ENCODE measurements at regions of chr10 and their contacts with region 1.

Region 1: GRCh38 chr10:104291439-104291951 is 22.5 kb downstream of the GSTO2 start:
- DNase-seq: peak; percentile 95
- ATAC-seq: peak; percentile 97

Region 2: DNA sequence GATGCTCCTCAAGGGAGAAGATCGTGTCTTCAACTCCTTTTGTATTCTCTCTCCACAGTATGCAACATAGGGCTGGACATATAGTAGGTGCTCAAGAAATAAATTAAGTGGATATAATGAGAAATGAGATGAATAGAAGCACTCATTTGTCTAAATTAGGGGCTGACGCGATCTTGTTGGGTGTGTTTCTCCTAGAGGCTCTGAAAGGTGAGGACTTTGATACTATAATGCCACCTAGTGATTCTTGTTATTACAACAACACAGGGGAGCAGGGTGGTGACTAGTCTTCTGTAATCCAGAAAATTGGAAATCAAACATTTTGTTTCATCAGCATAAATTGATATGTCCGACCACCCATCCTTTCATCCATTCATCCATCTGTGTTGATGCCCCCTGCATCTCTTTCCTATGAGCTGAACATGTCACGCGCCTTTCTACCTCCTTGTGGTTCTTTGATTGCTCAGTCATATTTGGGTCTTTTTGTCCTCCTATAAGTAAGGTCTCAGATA is 58.7 kb after region 1 on chr10:
- intact Hi-C with region 1: loop called (anchors 2 kb)
- DNase-seq: no peak
- ATAC-seq: peak; percentile 75

Measured in Right ventricle myocardium superior (tissue), 1 donor.